ENCODE measurements at regions of chr15 and their contacts with region 1.

Region 1: GRCh38 chr15:100849252-100850171 is 30.1 kb upstream of the ALDH1A3 start:
- DNase-seq: peak; percentile 86
- ATAC-seq: peak; percentile 79
- H3K4me3 ChIP-seq: peak overlapping the region; percentile 77
- H3K27ac ChIP-seq: peak overlapping the region; percentile 98
- H3K4me1 ChIP-seq: peaks cover 42% of the 10 kb centered on the region
- H3K27me3 ChIP-seq: no peaks in the 10 kb centered on the region
- CTCF ChIP-seq: peak; percentile 68

Region 2: DNA sequence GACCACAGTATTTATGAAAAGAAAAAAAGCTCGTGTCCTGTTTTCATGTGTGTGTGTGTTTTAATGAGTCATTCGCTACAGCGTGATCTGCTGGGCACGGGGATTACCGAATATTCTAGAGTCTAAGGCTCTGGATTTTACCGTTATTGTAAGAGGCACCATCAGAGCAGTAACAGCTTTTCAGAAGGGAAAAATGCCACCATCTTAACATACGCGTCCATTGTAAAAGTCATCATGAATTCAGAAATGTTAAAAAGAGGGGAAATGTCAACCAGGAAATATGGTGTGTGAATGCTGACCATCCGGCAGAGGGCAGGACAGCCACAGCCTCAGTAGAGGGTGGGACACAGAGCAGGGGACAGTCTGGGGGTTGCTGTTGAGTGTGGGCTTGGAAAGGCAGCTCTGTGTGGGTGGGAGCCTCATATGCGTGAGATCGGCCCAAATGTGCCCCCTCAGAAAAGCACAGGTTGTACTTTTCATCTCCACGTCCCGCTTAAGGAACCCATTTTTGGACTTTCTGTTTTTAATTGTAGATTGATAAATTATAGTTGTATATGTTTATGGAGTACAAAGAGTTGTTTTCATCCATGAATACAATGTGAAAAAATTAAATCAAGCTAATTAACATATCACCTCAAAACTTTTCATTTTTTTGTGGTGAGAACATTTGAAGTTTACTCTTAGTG is 177.5 kb before region 1 on chr15:
- CTCF ChIA-PET with region 1: no interaction called
- POLR2A ChIA-PET with region 1: interaction called, 13 read pairs
- intact Hi-C with region 1: no loop called
- DNase-seq: peak; percentile 47
- ATAC-seq: peak; percentile 84
- H3K4me3 ChIP-seq: no peak overlapping the region
- H3K27ac ChIP-seq: peak overlapping the region; percentile 60
- H3K4me1 ChIP-seq: peaks cover 23% of the 10 kb centered on the region
- H3K27me3 ChIP-seq: no peaks in the 10 kb centered on the region
- CTCF ChIP-seq: peak; percentile 66

Region 3: GRCh38 chr15:100713163-100713867 is 136.2 kb before region 1 on chr15:
- CTCF ChIA-PET with region 1: no interaction called
- POLR2A ChIA-PET with region 1: interaction called, 3 read pairs
- intact Hi-C with region 1: loop called (anchors 2 kb)
- DNase-seq: peak; percentile 99
- ATAC-seq: peak; percentile 91
- H3K4me3 ChIP-seq: no peak overlapping the region
- H3K27ac ChIP-seq: peak overlapping the region; percentile 97
- H3K4me1 ChIP-seq: peaks cover 33% of the 10 kb centered on the region
- H3K27me3 ChIP-seq: no peaks in the 10 kb centered on the region
- CTCF ChIP-seq: no peak

Region 4: DNA sequence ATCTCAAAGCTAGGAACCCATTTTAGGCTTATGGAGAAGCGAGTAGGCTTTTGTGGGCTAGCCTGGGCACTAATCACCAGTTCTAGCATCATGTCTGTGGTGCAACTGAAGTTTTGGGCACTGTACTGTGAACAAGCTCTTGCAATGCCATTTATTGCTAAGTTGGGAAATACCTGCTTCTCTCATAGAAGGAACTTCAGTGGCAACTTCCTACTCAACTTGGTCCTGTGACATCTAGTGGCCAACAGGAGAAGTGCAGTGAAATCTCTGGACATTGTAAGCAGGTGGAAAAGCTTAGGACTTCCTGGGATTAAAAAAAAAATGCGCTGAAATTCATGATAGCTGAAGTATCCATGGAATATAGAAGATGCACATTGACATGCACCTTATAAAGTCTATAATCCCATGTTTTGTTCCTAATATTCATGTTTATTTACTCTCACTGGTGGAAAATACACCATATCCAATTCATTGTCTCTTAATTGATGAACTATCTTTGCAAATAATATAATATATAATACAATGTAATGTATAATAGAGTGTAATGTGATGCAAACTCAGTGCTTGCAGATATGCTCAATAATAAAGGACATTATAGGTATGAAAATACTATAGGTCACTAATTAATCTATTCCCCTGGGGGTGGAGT is 23.6 kb after region 1 on chr15:
- CTCF ChIA-PET with region 1: interaction called, 6 read pairs
- POLR2A ChIA-PET with region 1: interaction called, 3 read pairs
- intact Hi-C with region 1: loop called (anchors 2 kb)
- DNase-seq: peak; percentile 96
- ATAC-seq: peak; percentile 69
- H3K4me3 ChIP-seq: no peak overlapping the region
- H3K27ac ChIP-seq: peak overlapping the region; percentile 54
- H3K4me1 ChIP-seq: peaks cover 18% of the 10 kb centered on the region
- H3K27me3 ChIP-seq: no peaks in the 10 kb centered on the region
- CTCF ChIP-seq: peak; percentile 81

Region 5: GRCh38 chr15:100879464-100880138 is 30.1 kb after region 1 on chr15 and contains the start of gene ALDH1A3:
- CTCF ChIA-PET with region 1: no interaction called
- POLR2A ChIA-PET with region 1: interaction called, 18 read pairs
- intact Hi-C with region 1: no loop called
- DNase-seq: peak; percentile 93
- ATAC-seq: peak; percentile 76
- H3K4me3 ChIP-seq: peak within 1 kb of the TSS; percentile 78
- H3K27ac ChIP-seq: peak within 1 kb of the TSS; percentile 95
- H3K4me1 ChIP-seq: peaks cover 32% of the 10 kb centered on the region
- H3K27me3 ChIP-seq: no peaks in the 10 kb centered on the region
- CTCF ChIP-seq: no peak
- total RNA-seq, gene ALDH1A3: 5,398 and 6,043 TPM in 2 replicates